Activated CD8-positive, alpha-beta T cell treated with anti-CD3 and anti-CD28 coated beads for 36 hours (primary cell): ENCODE measurements at regions of chr5 and their contacts with region 1.

Region 1: GRCh38 chr5:172274921-172275753 is 8.4 kb downstream of the UBTD2 start:
- DNase-seq: peak; percentile 84
- ATAC-seq: peak; percentile 89
- H3K4me3 Mint-ChIP-seq: peak overlapping the region; percentile 9
- H3K27ac Mint-ChIP-seq: peak overlapping the region; percentile 59
- H3K4me1 Mint-ChIP-seq: peaks cover 51% of the 10 kb centered on the region
- H3K27me3 Mint-ChIP-seq: no peaks in the 10 kb centered on the region
- CTCF ChIP-seq: no peak

Region 2: DNA sequence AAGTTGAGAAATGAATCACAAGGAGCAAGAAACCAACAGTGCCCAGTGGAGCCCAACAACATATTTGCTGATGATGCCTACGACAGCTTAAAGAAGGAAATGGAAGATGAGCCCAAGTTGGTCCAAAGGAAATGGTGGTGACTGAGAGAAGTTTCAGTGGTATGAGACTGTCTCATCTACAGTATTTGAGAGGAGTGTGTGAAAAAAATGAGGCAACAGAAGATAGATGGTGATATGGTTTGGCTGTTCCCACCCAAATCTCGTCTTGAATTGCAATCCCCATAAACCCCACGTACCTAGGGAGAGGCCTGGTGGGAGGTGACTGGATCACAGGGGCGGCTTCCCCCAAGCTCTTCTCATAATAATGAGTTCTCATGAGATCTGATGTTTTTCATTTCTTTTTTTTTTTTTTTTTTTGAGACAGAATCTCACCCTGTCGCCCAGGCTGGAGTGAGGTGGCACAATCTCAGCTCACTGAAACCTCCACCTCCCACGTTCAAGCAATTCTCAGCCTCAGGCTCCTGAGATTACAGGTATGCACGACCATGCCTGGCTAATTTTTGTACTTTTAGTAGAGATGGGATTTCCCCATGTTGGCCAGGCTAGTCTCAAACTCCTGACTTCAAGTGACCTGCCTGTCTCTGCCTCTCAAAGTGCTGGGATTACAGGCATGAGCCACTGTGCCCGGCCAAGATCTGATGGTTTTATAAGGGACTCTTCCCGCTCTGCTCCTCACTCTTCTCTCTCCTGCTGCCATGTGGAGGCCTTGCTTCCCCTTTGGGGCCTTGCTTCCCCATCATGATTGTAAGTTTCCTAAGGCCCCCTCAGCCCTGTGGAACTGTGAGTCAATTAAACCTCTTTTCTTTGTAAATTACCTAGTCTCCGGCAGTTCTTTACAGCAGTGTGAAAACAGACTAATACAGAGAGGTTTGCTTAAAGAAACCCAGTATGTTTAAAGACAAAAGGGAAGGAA is 51.0 kb before region 1 on chr5:
- CTCF ChIA-PET with region 1: no interaction called
- POLR2A ChIA-PET with region 1: no interaction called
- intact Hi-C with region 1: loop called (anchors 2 kb)
- DNase-seq: peak; percentile 77
- ATAC-seq: peak; percentile 88
- H3K4me3 Mint-ChIP-seq: no peak overlapping the region
- H3K27ac Mint-ChIP-seq: peak overlapping the region; percentile 77
- H3K4me1 Mint-ChIP-seq: peaks cover 30% of the 10 kb centered on the region
- H3K27me3 Mint-ChIP-seq: no peaks in the 10 kb centered on the region
- CTCF ChIP-seq: no peak

Region 3: DNA sequence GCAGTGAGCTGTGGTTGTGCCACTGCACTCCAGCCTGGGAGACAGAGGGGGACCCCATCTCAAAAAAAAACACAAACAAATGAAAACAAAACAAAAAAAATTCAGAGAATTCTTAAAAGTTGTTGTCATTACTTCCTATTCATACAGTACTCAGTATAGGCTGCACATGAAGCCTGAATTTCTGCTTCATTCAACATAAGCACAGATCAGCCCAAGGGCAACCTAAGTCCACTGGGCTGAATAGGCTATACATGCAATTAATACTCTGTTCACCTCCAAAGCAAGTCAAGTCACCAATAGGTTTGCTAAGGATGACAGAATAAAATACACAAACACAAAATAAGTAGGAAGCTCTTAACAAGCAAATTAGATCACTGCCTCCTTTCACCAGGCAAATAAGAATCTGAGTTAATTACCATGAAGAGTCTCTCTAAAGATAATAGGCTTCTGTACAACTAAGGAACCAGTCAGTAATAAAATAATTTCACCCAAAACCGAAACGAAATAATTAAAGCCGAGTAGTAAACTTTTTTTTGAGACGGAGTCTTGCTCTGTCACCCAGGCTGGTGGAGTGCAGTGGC is 10.2 kb before region 1 on chr5:
- CTCF ChIA-PET with region 1: no interaction called
- POLR2A ChIA-PET with region 1: no interaction called
- intact Hi-C with region 1: no loop called
- DNase-seq: no peak
- ATAC-seq: no peak
- H3K4me3 Mint-ChIP-seq: no peak overlapping the region
- H3K27ac Mint-ChIP-seq: no peak overlapping the region
- H3K4me1 Mint-ChIP-seq: peaks cover 13% of the 10 kb centered on the region
- H3K27me3 Mint-ChIP-seq: no peaks in the 10 kb centered on the region
- CTCF ChIP-seq: no peak

Region 4: DNA sequence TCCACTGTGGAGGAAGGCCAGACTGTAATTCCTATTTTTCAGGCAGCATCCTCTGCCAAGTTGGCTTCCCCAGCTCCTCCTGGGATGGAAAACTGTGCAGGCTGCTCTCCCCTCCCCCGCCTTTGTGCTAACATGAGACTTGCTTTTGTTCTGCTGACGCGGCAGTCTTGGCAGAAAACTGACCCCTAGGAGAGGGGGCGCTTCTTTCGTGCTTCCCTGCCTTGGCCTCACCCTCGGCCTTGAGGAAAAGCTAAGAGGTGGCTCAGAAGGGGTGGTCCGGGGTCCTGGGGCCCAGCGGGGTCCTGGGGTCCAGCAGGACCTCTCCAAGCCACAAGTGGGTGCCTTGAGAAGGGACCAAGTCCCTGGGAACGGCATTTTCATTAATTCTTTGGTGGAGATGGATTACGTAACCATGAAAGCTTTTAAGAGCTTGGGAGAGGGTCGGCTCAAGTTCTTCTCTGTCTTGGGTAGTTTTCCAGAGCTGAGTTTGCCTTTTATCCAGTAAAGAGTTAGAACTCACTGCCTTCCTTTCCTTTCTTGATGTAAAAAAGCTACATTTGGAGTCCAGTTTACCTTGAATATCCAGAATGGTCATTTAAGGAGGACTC is 128.2 kb after region 1 on chr5:
- CTCF ChIA-PET with region 1: no interaction called
- POLR2A ChIA-PET with region 1: no interaction called
- intact Hi-C with region 1: no loop called
- DNase-seq: no peak
- ATAC-seq: no peak
- H3K4me3 Mint-ChIP-seq: no peak overlapping the region
- H3K27ac Mint-ChIP-seq: no peak overlapping the region
- H3K4me1 Mint-ChIP-seq: no peaks in the 10 kb centered on the region
- H3K27me3 Mint-ChIP-seq: peaks cover 6% of the 10 kb centered on the region
- CTCF ChIP-seq: no peak